ENCODE measurements at regions of chr3 and their contacts with region 1.

Region 1: GRCh38 chr3:41961750-41962679 is at the start of gene ULK4:
- DNase-seq: peak; percentile 93 to 98 (median 98)
- H3K4me3 ChIP-seq: peak within 1 kb of the TSS; percentile 68 to 99 (median 92)
- H3K27ac ChIP-seq: peak within 1 kb of the TSS in 50 of 59 donors; percentile 30 to 84 (median 64)
- H3K27me3 ChIP-seq: no peaks in the 10 kb centered on the region
- CTCF ChIP-seq: peak in 14 of 56 donors; percentile 4 to 43 (median 19)
- total RNA-seq, gene ULK4: 7.7 to 29.9 (median 14.8) TPM

Region 2: DNA sequence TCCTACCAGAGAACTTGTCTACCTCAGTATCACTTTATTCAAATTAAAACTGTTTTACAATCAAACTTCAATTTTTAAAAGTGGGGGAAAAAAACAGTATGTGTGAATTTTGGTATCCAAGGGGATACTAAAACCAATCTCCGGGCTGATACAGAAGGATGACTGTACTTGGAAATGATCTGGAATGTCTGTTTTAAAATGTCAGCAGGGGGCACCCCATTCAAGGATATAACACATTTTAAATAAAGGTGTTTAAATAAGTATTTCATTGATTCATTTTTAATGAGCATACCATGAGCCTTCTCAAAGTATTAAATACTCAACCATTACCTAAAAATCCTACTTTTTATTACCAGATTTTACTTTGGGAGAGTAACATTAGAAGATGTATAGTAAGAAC is 68.0 kb before region 1 on chr3:
- intact Hi-C with region 1: loop called in 1 of 2 experiments (anchors 10 kb)
- DNase-seq: peak in 1 of 10 donors; percentile 22
- H3K4me3 ChIP-seq: no peak overlapping the region
- H3K27ac ChIP-seq: no peak overlapping the region
- H3K27me3 ChIP-seq: no peaks in the 10 kb centered on the region
- CTCF ChIP-seq: peak; percentile 23 to 86 (median 59)

Region 3: DNA sequence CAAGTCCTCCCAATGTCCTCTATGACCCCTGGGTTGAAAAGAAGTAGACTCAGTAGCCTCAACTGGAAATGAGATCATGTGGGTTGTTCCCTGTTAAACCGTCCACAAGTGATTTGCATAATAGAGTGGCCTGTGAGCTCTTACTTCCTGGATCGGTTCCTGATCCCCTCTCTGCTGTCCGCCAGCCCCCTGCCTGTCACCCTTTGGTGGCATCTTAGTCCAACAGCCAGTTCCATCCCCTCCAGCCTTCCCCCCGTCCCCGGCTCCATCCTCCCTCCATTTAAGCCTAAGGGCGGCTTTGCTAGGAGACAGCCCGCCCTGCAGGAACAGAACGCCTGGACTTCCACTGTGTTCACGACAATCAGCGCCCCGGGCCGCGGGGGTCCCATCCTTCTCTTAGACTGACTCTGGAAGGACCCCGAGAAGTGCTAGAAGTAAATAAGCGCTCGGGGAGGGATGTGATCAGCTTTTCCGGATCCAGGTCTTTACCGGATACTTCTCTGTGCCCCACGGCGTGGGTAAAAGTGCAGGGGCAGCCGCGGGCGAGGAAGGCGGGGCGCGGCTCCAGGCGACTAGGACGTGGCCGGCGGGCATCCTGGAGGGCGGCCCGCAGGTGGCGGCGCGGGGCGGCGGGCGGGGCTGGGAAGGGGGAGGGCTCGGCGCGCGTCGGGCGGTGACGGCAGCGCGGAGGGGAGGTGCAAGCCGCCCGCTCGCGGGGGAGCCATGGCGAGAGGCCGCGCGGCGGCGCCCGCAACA is 51.1 kb after region 1 on chr3:
- intact Hi-C with region 1: loop called (anchors 5 kb)
- DNase-seq: peak in 9 of 10 donors; percentile 44 to 77 (median 60)
- H3K4me3 ChIP-seq: peak overlapping the region; percentile 46 to 98 (median 75)
- H3K27ac ChIP-seq: peak overlapping the region in 57 of 59 donors; percentile 14 to 91 (median 83)
- H3K27me3 ChIP-seq: no peaks in the 10 kb centered on the region
- CTCF ChIP-seq: peak in 5 of 56 donors; percentile 6 to 40 (median 16)

Region 4: DNA sequence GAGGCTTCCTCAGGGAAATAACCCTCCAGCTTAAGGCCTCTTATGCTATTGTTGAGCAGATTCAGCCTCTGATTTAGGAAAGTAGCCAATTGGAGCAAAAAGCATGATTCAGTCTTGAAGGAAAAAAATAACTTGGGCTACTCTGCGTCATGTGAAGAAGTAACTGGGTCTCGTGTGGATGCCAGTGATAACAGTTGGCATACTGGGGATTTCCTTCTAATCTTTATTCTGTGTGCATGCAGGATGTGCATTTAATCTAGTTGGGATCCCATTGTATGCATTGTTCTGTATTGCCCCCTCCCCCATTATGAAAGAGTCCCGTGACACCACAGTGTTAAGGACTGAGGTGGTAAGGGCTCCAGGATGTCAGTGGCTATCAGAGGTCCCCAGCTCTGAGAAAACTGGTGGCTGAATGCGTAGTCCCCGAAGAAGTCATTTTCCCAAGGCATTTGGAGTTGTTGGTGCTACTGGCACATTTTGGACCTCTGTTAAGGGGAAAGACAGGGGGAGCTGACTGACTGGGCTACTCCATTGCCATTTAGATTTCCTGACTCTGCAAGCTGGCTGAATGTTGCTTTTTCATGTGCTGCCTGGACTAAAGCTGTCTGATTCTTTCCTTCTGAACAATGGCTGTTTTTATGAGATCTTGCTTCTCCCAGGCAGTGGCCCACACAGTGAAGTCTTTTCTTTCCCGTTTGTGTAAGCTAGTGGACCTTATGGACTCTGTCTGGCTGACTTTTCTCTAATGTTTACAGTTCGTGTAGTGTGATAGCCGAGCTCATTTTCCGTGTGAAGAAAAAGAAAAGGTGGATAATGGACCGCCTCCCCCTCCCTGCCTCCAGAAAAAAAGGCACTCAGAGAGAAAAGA is 90.7 kb after region 1 on chr3:
- intact Hi-C with region 1: loop called in 1 of 2 experiments (anchors 2 kb)
- DNase-seq: peak in 5 of 10 donors; percentile 24 to 71 (median 37)
- H3K4me3 ChIP-seq: peak overlapping the region in 29 of 59 donors; percentile 0 to 43 (median 20)
- H3K27ac ChIP-seq: peak overlapping the region in 56 of 59 donors; percentile 0 to 90 (median 70)
- H3K27me3 ChIP-seq: no peaks in the 10 kb centered on the region
- CTCF ChIP-seq: peak in 51 of 56 donors; percentile 6 to 72 (median 42)

Region 5: GRCh38 chr3:42090973-42091731 is 129.1 kb after region 1 on chr3 and contains the start of gene TRAK1:
- intact Hi-C with region 1: loop called in 1 of 2 experiments (anchors 10 kb)
- DNase-seq: peak in 3 of 10 donors; percentile 42 to 64 (median 57)
- H3K4me3 ChIP-seq: peak within 1 kb of the TSS; percentile 1 to 64 (median 45)
- H3K27ac ChIP-seq: peak within 1 kb of the TSS in 55 of 59 donors; percentile 1 to 83 (median 67)
- H3K27me3 ChIP-seq: no peaks in the 10 kb centered on the region
- CTCF ChIP-seq: peak in 2 of 56 donors; percentile 7 to 11
- total RNA-seq, gene TRAK1: 52.9 to 121 (median 72.5) TPM

Region 6: GRCh38 chr3:42101048-42101447 is 139.0 kb after region 1 on chr3:
- intact Hi-C with region 1: loop called (anchors 1 to 10 kb)
- DNase-seq: no peak
- H3K4me3 ChIP-seq: no peak overlapping the region
- H3K27ac ChIP-seq: peak overlapping the region in 27 of 59 donors; percentile 1 to 71 (median 32)
- H3K27me3 ChIP-seq: no peaks in the 10 kb centered on the region
- CTCF ChIP-seq: no peak